Left cardiac atrium (tissue), 4 donors: ENCODE measurements at regions of chr3 and their contacts with region 1.

Region 1: GRCh38 chr3:139427283-139427993 is 38.0 kb upstream of the COPB2 start:
- DNase-seq: no peak
- ATAC-seq: peak; percentile 76 to 87

Region 2: DNA sequence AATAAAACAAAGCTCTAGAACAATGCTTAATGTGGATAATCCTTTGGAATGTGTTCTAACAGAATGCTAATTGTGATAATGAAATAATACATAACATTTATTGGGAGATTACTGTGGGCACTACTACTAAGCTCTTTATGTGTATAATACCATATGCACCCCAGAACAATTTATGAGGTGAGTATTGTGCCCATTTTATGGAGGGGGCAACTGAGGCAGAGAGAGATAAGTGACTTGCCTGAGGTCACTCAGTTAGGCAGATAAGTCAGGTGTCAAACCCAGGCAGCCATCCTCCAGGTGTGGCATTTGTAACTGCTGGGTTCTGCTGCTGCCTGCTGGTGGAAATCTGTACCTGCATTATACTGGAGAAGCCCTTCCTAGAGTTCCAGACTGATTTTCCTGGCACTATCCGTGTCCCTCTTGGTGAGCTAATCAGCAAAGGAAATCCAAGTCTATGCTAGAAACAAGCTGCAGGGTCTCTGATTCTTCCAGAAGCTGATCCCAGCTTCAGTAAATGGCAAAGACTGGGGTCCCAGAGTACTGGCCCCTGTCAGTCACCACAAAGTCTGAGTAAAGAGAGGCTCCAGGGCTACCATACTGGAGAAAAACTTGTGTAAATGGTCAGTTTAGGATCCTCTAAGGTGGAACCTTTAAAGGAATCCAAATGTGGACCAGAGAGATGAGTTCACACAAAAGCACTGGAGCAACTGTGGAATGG is 134.7 kb after region 1 on chr3:
- intact Hi-C with region 1: loop called (anchors 2 to 10 kb)
- DNase-seq: peak; percentile 33
- ATAC-seq: peak; percentile 57 to 80